Breast epithelium (tissue), 4 donors: ENCODE measurements at regions of chr7 and their contacts with region 1.

Region 1: DNA sequence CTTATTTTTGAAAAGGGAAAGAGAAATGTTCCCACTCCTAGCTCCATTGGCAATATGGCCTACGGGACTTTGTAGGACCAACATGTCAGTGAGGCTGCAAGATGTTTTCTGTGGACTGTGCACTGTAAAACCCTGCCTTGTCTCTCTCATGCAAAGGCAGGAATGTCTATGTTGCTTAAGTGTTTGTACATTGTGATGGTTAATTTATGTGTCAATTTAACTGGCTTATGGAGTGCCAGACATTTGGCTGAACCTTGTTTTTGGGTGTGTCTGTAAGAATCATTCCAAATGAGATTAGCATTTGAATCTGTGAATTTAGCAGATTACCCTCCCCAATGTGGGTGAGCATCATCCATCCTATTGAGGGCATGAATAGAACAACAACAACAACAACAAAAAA is 4.1 kb upstream of the PCLO start:
- DNase-seq: no peak
- H3K4me3 ChIP-seq: no peak overlapping the region
- H3K27ac ChIP-seq: no peak overlapping the region
- H3K4me1 ChIP-seq: no peaks in the 10 kb centered on the region
- H3K27me3 ChIP-seq: no peaks in the 10 kb centered on the region
- CTCF ChIP-seq: no peak
- POLR2A ChIP-seq: no peak

Region 2: DNA sequence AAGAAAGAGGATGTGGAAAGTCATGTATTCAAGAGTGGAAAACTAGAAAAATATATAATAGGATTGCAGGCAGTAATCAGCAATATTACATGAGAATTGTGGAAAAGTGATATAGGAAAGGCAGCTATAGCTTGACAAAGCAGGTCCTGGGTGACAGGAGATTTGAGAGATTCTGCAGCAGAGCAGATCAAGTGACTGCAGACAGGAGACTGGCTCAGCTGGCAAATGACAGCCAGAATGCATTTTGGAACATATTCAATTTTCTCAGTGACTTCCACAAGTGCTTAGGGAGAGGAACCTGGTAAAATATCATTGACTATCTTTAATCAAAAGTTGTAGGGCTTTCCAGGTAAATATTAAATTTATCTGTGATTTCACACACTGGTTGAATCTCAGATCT is 462.7 kb before region 1 on chr7:
- intact Hi-C with region 1: no loop called
- DNase-seq: no peak
- H3K4me3 ChIP-seq: no peak overlapping the region
- H3K27ac ChIP-seq: no peak overlapping the region
- H3K4me1 ChIP-seq: no peaks in the 10 kb centered on the region
- H3K27me3 ChIP-seq: no peaks in the 10 kb centered on the region
- CTCF ChIP-seq: no peak
- POLR2A ChIP-seq: no peak

Region 3: DNA sequence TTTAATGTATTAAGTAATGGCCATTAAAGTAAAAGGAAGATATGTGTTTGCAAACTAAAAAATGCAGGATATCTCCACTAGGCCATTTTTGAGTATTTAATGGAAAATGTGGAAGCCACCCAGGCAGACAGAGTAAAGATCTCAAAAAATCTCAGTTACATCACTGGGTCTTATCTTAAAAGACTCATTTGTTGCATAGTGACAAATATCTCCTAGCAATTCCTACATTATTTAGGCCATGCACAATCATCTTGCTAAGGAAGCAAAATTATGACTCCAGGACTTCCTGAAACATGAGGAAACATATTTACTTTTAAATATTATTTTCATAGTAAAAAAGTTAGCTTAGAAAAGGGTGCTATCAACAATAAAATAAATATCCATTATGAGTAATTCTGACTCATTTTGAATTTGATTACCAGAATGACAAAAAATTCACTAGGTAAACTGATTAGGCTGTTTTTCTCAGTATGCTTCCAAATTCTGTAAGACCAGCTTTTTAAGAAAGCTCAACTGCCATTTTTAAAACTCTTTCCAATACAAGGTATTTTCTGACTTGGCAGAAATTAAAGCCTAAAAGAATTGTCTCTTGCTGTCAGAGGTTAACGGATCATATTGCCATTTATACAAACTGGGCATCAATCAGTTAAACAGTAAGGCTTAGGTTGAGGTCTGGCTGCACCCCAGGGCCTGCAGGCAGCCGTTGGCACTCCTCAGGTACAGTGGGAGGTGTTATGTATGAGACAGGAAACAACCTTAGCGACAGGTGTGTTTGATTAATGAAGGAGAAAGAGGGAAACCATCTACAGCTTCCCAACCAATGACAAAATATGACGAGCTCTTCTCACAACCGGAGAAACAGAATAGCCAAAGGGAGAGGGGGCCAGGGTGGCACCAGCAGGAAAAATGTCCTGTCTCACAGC is 35.9 kb before region 1 on chr7:
- intact Hi-C with region 1: loop called (anchors 2 kb)
- DNase-seq: no peak
- H3K4me3 ChIP-seq: no peak overlapping the region
- H3K27ac ChIP-seq: no peak overlapping the region
- H3K4me1 ChIP-seq: no peaks in the 10 kb centered on the region
- H3K27me3 ChIP-seq: no peaks in the 10 kb centered on the region
- CTCF ChIP-seq: no peak
- POLR2A ChIP-seq: no peak

Region 4: GRCh38 chr7:83701736-83702135 is 535.0 kb after region 1 on chr7:
- intact Hi-C with region 1: no loop called
- DNase-seq: no peak
- H3K4me3 ChIP-seq: no peak overlapping the region
- H3K27ac ChIP-seq: no peak overlapping the region
- H3K4me1 ChIP-seq: no peaks in the 10 kb centered on the region
- H3K27me3 ChIP-seq: no peaks in the 10 kb centered on the region
- CTCF ChIP-seq: no peak
- POLR2A ChIP-seq: no peak